ENCODE measurements at regions of chr14 and their contacts with region 1.

Region 1: GRCh38 chr14:81927070-81927469 is 393.4 kb upstream of the SEL1L start:
- DNase-seq: no peak
- H3K4me3 ChIP-seq: no peak overlapping the region
- H3K27ac ChIP-seq: no peak overlapping the region
- H3K4me1 ChIP-seq: no peaks in the 10 kb centered on the region
- H3K27me3 ChIP-seq: no peaks in the 10 kb centered on the region
- CTCF ChIP-seq: no peak
- POLR2A ChIP-seq: no peak

Region 2: DNA sequence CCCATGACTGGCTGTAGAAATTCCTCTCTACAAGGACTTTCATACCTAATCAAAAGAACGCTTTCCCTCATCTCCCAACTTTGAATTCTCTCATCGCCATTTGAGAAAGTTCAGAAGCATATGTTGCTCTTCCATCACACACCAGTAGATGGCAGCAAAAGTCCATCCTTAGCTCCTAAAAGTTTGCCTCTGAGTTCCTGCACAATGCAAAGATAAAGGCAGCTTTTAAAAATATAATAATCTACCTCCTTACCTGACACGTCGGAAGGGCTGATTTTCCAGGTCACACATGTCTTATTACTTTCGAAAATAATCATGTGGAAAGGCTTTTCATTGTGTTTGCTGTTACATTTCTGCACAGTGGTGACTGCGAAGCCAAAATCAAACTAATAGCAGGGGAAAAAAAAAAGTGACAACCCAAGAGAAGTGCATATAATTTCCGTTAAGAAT is 63.3 kb after region 1 on chr14:
- intact Hi-C with region 1: no loop called
- DNase-seq: no peak
- H3K4me3 ChIP-seq: no peak overlapping the region
- H3K27ac ChIP-seq: no peak overlapping the region
- H3K4me1 ChIP-seq: no peaks in the 10 kb centered on the region
- H3K27me3 ChIP-seq: no peaks in the 10 kb centered on the region
- CTCF ChIP-seq: peak in 2 of 3 donors; percentile 68 to 86
- POLR2A ChIP-seq: no peak

Region 3: DNA sequence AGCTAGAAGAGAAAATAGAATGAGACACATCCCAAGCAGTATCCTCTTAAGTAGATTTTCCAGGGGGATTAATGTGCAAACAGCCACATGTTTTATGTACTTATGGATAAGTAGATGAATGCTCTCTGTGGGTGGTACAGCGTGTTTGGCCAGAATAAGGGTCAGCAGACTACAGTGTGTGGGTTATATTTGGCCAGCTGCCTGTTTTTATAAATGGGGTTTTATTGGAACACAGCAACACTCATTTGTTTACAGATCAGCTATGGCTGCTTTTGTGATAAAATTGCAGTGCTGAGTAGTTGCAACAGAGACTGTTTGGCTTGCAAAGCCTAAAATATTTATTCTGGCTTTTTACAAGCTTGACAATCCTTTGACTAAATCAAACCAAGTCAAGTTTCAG is 386.8 kb after region 1 on chr14:
- intact Hi-C with region 1: loop called (anchors 10 kb)
- DNase-seq: no peak
- H3K4me3 ChIP-seq: no peak overlapping the region
- H3K27ac ChIP-seq: no peak overlapping the region
- H3K4me1 ChIP-seq: no peaks in the 10 kb centered on the region
- H3K27me3 ChIP-seq: no peaks in the 10 kb centered on the region
- CTCF ChIP-seq: no peak
- POLR2A ChIP-seq: no peak

Measured in breast epithelium (tissue), 4 donors.